MCF 10A (cell line): ENCODE measurements at regions of chr1 and their contacts with region 1.

Region 1: GRCh38 chr1:93629099-93630059 is 52.3 kb downstream of the BCAR3 start:
- DNase-seq: peak; percentile 76
- H3K4me3 Mint-ChIP-seq: peak overlapping the region; percentile 52
- H3K27ac Mint-ChIP-seq: peak overlapping the region; percentile 95
- H3K4me1 Mint-ChIP-seq: peaks cover 46% of the 10 kb centered on the region
- H3K27me3 Mint-ChIP-seq: no peaks in the 10 kb centered on the region
- CTCF ChIP-seq: peak; percentile 63

Region 2: DNA sequence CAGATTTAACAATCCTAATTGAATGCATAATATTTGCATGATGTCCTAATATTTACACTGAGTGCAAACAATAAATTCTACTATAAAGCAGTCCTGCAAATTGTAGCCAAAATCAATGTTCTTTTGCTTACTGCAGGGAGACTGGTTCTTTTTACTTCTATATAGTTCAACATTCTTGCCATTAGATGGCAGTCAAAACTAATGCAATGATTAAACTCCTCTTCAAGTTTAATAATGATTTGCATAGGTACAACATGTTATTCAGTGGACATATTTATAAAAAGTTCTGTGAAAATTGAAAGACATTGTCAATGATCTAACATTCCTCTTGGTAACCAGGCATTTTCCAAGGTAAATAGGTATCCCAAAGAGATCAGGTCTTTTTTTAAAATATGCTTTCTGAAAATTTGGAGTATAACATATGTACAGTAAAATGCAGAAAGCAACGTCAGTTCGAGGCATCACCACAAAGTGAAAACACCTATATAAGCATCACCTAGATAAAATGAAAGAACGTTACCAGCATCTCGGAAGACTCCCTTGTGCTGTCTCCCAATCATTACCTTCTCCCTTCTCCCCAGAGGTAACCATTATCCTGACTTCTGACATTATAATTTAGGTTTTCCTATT is 191.3 kb before region 1 on chr1:
- CTCF ChIA-PET with region 1: interaction called, 7 read pairs
- POLR2A ChIA-PET with region 1: interaction called, 5 read pairs
- intact Hi-C with region 1: loop called (anchors 1 kb)
- DNase-seq: peak; percentile 55
- H3K4me3 Mint-ChIP-seq: no peak overlapping the region
- H3K27ac Mint-ChIP-seq: no peak overlapping the region
- H3K4me1 Mint-ChIP-seq: peaks cover 6% of the 10 kb centered on the region
- H3K27me3 Mint-ChIP-seq: no peaks in the 10 kb centered on the region
- CTCF ChIP-seq: peak; percentile 45

Region 3: GRCh38 chr1:93537924-93538323 is 91.5 kb before region 1 on chr1:
- CTCF ChIA-PET with region 1: no interaction called
- POLR2A ChIA-PET with region 1: no interaction called
- intact Hi-C with region 1: no loop called
- DNase-seq: no peak
- H3K4me3 Mint-ChIP-seq: no peak overlapping the region
- H3K27ac Mint-ChIP-seq: no peak overlapping the region
- H3K4me1 Mint-ChIP-seq: peaks cover 6% of the 10 kb centered on the region
- H3K27me3 Mint-ChIP-seq: no peaks in the 10 kb centered on the region
- CTCF ChIP-seq: no peak

Region 4: DNA sequence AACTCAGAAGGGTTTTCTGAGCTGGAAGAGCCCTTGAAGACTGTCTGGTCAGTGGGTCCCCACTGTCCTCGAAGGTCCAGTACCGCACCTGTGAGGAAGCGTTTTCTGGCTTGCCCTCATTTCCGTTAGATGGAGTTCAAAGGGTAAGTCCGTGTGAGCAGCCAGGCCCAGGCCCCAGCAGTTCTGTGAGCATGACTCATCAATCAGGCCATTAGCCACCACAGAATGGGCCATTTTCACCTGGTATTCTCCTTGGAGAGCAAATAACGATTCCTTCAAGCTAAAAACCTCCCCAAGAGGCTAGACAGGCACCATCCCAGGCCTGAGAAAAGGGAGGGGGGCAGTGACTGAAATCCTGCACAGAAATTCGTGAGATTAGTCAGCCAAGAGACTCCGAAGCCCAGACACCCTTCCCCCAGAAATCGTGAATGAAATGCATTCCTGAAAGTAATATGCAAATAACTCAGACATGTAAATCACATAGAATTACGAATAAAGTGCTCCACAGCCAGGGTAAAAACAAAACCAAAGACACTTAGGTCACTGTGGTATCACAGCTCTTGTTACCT is 13.7 kb before region 1 on chr1:
- CTCF ChIA-PET with region 1: interaction called, 11 read pairs
- POLR2A ChIA-PET with region 1: interaction called, 17 read pairs
- intact Hi-C with region 1: no loop called
- DNase-seq: peak; percentile 60
- H3K4me3 Mint-ChIP-seq: no peak overlapping the region
- H3K27ac Mint-ChIP-seq: peak overlapping the region; percentile 97
- H3K4me1 Mint-ChIP-seq: peaks cover 65% of the 10 kb centered on the region
- H3K27me3 Mint-ChIP-seq: no peaks in the 10 kb centered on the region
- CTCF ChIP-seq: no peak

Region 5: GRCh38 chr1:93672069-93672468 is 42.7 kb after region 1 on chr1:
- CTCF ChIA-PET with region 1: interaction called, 11 read pairs
- POLR2A ChIA-PET with region 1: interaction called, 5 read pairs
- intact Hi-C with region 1: no loop called
- DNase-seq: peak; percentile 89
- H3K4me3 Mint-ChIP-seq: no peak overlapping the region
- H3K27ac Mint-ChIP-seq: peak overlapping the region; percentile 42
- H3K4me1 Mint-ChIP-seq: peaks cover 63% of the 10 kb centered on the region
- H3K27me3 Mint-ChIP-seq: no peaks in the 10 kb centered on the region
- CTCF ChIP-seq: no peak

Region 6: GRCh38 chr1:93839753-93840152 is 210.4 kb after region 1 on chr1:
- CTCF ChIA-PET with region 1: interaction called, 58 read pairs
- POLR2A ChIA-PET with region 1: interaction called, 44 read pairs
- intact Hi-C with region 1: loop called (anchors 1 kb)
- DNase-seq: no peak
- H3K4me3 Mint-ChIP-seq: no peak overlapping the region
- H3K27ac Mint-ChIP-seq: peak overlapping the region; percentile 44
- H3K4me1 Mint-ChIP-seq: peaks cover 9% of the 10 kb centered on the region
- H3K27me3 Mint-ChIP-seq: no peaks in the 10 kb centered on the region
- CTCF ChIP-seq: no peak